Activated B cell treated with CpG ODN at 0.5 μM for 24 hours (primary cell): ENCODE measurements at regions of chr12 and their contacts with region 1.

Region 1: DNA sequence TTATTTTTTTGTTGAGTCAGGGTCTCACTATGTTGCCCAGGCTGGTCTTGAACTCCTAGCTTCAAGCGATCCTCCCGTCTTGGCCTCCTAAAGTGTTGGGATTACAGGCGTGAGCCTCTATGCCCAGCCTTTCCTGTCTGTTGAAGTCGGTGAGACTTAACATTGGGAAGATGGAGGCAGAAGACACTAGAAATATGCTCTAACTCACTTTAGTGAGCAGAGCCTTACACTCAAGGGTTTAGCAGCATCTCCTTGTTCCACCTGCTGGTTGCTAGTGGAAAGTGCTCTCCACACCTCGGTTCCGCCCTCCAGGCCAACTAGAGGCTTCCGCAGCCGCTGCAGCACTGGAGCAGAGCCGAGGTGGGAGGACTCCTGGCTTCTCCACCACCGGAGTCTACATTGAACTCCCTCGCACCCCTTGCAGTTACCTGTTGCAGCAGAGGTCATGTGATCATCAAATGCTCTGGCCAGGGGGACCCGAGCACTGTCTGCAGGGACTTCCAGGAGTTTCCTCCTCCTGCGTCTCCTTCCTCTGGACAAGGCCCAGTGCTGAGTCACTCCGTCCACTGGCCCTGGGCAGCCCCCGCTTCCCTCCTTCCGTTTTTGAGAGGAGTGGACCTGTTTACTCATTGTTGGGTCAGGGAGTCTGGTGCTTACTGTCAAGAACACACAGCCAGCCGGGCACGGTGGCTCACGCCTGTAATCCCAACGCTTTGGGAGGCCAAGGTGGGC is 9.4 kb upstream of the HVCN1 start:
- DNase-seq: peak; percentile 60
- ATAC-seq: peak; percentile 100
- H3K4me3 Mint-ChIP-seq: peak overlapping the region; percentile 61
- H3K27ac Mint-ChIP-seq: peak overlapping the region; percentile 91
- H3K4me1 Mint-ChIP-seq: peaks cover 38% of the 10 kb centered on the region
- H3K27me3 Mint-ChIP-seq: no peaks in the 10 kb centered on the region
- CTCF ChIP-seq: peak; percentile 17

Region 2: GRCh38 chr12:110508071-110508586 is 190.2 kb before region 1 on chr12:
- CTCF ChIA-PET with region 1: interaction called, 6 read pairs
- POLR2A ChIA-PET with region 1: no interaction called
- intact Hi-C with region 1: loop called (anchors 1 kb)
- DNase-seq: no peak
- ATAC-seq: no peak
- H3K4me3 Mint-ChIP-seq: no peak overlapping the region
- H3K27ac Mint-ChIP-seq: no peak overlapping the region
- H3K4me1 Mint-ChIP-seq: peaks cover 2% of the 10 kb centered on the region
- H3K27me3 Mint-ChIP-seq: no peaks in the 10 kb centered on the region
- CTCF ChIP-seq: no peak

Region 3: GRCh38 chr12:110555577-110556406 is 142.5 kb before region 1 on chr12:
- CTCF ChIA-PET with region 1: no interaction called
- POLR2A ChIA-PET with region 1: no interaction called
- intact Hi-C with region 1: loop called (anchors 1 kb)
- DNase-seq: no peak
- ATAC-seq: no peak
- H3K4me3 Mint-ChIP-seq: no peak overlapping the region
- H3K27ac Mint-ChIP-seq: no peak overlapping the region
- H3K4me1 Mint-ChIP-seq: peaks cover 63% of the 10 kb centered on the region
- H3K27me3 Mint-ChIP-seq: no peaks in the 10 kb centered on the region
- CTCF ChIP-seq: no peak

Region 4: DNA sequence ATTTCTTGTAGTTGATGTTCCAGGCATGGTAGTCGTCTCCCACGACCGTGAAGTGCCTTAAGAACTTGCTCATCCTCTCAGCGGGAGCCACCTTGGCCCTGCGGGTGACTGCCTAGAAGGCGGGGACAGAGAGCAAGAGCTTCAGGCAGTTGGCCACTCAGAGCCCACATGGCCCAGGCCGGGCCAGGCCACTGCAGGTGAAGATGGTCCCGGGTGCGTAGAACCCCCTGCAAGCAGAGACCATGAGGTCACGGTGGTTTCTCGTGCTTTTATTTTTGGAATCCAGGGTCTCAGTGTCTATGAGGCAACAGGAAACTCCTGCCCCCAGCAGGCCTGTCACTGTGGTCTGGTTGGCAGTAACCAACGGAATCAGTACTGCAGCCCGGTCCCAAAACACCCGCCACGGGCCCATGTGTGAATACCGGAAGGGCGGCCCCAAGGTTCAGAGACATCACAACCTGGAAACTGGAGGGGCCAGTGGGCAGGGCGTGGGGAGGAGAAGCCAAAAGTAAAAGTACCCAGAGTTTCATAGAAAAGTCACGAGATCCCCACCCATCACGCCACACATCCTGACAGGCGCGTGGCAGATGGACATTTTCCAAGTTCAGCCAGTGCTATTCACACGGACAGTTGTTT is 36.9 kb before region 1 on chr12:
- CTCF ChIA-PET with region 1: interaction called, 4 read pairs
- POLR2A ChIA-PET with region 1: interaction called, 3 read pairs
- intact Hi-C with region 1: loop called (anchors 1 kb)
- DNase-seq: peak; percentile 73
- ATAC-seq: peak; percentile 87
- H3K4me3 Mint-ChIP-seq: peak overlapping the region; percentile 82
- H3K27ac Mint-ChIP-seq: peak overlapping the region; percentile 97
- H3K4me1 Mint-ChIP-seq: peaks cover 89% of the 10 kb centered on the region
- H3K27me3 Mint-ChIP-seq: no peaks in the 10 kb centered on the region
- CTCF ChIP-seq: no peak

Region 5: DNA sequence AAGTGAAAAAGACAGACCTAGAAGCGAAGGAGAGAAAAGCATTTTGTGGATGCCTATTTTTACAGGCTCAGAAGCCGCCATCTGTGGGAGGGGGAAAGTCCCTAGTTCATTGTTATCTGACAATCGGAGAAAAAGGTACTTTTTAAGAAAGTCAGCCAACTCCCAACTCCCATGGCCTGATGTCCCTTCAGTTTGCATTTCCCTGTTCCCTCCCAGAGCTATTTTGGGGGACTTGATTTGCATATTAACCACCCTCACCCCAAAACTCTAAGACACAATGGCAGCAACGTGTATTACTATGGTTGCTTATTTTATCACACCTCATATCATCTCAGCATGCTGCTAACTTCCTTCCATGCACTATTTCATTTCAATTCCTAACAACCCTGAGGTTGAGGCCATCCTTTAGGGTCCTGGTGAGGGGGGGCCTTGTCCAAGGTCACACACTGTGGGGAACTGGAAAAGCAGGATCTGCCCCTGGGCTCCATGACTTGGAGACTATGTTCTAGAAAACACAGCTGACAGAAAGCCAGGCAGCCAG is 28.1 kb before region 1 on chr12:
- CTCF ChIA-PET with region 1: interaction called, 3 read pairs
- POLR2A ChIA-PET with region 1: interaction called, 3 read pairs
- intact Hi-C with region 1: loop called (anchors 1 kb)
- DNase-seq: no peak
- ATAC-seq: peak; percentile 36
- H3K4me3 Mint-ChIP-seq: peak overlapping the region; percentile 78
- H3K27ac Mint-ChIP-seq: peak overlapping the region; percentile 94
- H3K4me1 Mint-ChIP-seq: peaks cover 96% of the 10 kb centered on the region
- H3K27me3 Mint-ChIP-seq: no peaks in the 10 kb centered on the region
- CTCF ChIP-seq: no peak